Panc1 (cell line): ENCODE measurements at regions of chr3 and their contacts with region 1.

Region 1: DNA sequence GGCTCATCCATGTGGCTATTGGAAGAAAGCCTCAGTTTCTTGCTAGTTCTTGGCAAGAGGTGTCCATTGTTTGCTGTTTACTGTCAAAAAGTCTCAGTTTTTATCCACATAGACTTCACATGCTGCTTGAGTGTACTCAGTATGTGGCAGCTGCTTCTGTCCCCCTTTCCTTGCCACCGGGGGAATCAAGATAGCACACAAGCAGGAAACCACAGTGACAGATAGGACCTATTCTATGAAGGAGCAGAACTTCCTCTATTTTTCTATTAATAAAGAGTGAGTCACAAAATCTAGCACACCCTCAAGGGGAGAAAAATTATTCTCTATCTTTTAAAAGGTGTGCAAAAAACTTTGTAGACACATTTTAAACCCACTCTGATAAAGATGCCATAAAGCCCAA is 121.4 kb upstream of the GMNC start:
- DNase-seq: no peak
- ATAC-seq: no peak
- H3K4me3 ChIP-seq: no peak overlapping the region
- H3K27ac ChIP-seq: no peak overlapping the region
- H3K4me1 ChIP-seq: no peaks in the 10 kb centered on the region
- H3K27me3 ChIP-seq: no peaks in the 10 kb centered on the region
- CTCF ChIP-seq: no peak

Region 2: DNA sequence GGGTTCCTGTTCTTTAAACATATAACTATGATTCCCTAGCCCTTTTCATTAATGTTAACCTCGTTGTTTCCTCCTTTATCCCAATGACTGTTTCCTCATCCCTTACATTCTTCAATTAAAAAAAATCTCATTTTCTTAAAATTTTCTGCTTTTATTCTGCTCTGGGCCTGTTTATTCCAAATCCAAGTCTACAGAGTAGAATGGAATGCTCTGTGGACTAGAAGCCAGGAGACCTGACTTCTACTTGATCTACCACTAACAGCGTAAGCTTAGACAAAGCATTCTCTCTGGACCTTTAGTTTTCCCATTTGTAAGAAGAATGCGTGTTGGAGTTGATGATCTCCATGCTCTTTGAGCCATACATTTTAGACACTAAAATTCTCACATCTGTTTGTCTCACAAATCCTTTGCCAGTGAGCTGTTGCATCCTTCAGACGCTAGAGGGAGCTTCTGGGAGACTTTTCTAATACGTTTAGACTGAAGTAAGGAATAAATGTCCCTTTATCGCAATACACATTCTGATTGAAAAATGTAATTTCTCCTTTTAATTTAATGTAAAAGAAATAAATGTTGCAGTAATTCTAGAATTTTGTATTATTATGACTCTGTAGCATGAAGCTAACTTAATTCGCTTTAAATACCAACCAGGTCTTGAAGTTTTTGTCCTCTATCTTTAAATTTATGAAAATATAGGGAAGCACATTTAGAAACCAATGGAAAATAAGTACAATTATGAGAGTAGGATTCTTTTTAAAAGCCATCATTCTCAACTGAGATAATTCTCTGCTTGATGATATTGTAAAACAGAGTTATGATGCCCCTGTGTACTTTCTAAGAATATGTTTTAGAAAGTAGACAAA is 99.7 kb before region 1 on chr3:
- CTCF ChIA-PET with region 1: no interaction called
- POLR2A ChIA-PET with region 1: interaction called, 13 read pairs
- in situ Hi-C with region 1: no loop called
- intact Hi-C with region 1: no loop called
- DNase-seq: peak; percentile 56
- ATAC-seq: peak; percentile 88
- H3K4me3 ChIP-seq: no peak overlapping the region
- H3K27ac ChIP-seq: no peak overlapping the region
- H3K4me1 ChIP-seq: no peaks in the 10 kb centered on the region
- H3K27me3 ChIP-seq: no peaks in the 10 kb centered on the region
- CTCF ChIP-seq: peak; percentile 92